ENCODE measurements at regions of chr14 and their contacts with region 1.

Region 1: DNA sequence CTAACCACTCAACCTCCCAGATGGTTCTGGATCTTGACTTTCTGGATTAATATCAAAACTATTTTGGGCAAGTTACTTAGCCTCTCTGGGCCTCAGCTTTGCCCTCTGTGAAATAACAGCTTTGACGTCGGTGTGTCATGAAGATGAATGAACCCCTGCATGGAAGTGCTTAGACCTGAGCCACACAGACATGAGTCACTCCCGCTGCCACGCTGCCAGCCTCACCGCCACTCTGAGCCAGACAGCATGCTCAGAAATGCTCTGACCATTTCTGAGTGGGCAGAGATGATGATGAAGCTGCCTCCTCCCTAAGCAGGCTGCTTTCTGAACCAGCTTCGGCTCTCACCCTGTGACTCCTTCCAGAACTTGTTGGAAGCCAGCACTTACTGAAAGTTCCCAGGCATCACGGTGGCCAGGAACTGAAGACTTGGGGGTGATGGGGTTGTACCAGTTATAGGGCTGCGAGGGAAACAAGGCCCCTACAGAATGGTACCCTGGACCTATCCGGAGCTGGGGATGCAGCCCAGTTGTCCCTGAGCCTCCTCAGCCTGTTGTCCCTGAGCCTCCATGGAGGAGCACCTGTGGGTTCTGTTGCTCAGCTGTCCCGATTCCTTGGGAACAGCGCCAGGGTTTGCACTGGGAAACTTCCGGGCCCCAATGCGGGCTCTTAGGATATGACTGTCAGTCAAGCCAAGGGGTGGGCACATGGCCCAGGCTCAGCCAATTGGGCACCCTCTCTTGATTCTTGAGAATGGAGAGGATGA is 2.0 kb upstream of the CCDC197 start:
- DNase-seq: peak; percentile 95
- H3K4me3 ChIP-seq: no peak overlapping the region
- H3K27ac ChIP-seq: peak overlapping the region; percentile 61
- H3K4me1 ChIP-seq: peaks cover 21% of the 10 kb centered on the region
- H3K27me3 ChIP-seq: no peaks in the 10 kb centered on the region
- CTCF ChIP-seq: no peak

Region 2: GRCh38 chr14:93959239-93960107 is 35.6 kb before region 1 on chr14:
- CTCF ChIA-PET with region 1: no interaction called
- dilution Hi-C with region 1: no loop called
- in situ Hi-C with region 1: no loop called
- intact Hi-C with region 1: loop called (anchors 1 kb)
- DNase-seq: peak; percentile 100
- H3K4me3 ChIP-seq: no peak overlapping the region
- H3K27ac ChIP-seq: peak overlapping the region; percentile 87
- H3K4me1 ChIP-seq: peaks cover 41% of the 10 kb centered on the region
- H3K27me3 ChIP-seq: no peaks in the 10 kb centered on the region
- CTCF ChIP-seq: no peak

Region 3: DNA sequence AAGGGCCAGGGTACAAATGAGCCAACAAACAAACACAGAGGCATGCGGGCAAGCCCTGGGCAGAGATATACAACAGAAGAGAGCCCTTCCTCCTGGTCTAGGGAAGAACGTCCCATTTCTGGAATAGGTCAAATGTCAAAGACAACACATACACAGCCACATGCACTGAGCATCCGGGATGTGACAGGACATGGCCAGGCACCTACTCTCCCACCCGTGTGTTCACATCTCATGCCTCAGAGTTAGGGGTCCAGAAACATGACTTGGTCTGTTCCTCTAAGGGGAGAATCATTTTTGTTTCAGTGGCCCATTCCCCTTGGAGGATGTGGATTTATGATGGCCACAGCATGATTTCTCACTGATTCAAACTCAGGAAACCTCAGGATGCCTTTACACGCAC is 17.9 kb before region 1 on chr14:
- CTCF ChIA-PET with region 1: no interaction called
- dilution Hi-C with region 1: no loop called
- in situ Hi-C with region 1: no loop called
- intact Hi-C with region 1: no loop called
- DNase-seq: no peak
- H3K4me3 ChIP-seq: no peak overlapping the region
- H3K27ac ChIP-seq: no peak overlapping the region
- H3K4me1 ChIP-seq: no peaks in the 10 kb centered on the region
- H3K27me3 ChIP-seq: no peaks in the 10 kb centered on the region
- CTCF ChIP-seq: no peak